H1 (cell line): ENCODE measurements at regions of chr15 and their contacts with region 1.

Region 1: DNA sequence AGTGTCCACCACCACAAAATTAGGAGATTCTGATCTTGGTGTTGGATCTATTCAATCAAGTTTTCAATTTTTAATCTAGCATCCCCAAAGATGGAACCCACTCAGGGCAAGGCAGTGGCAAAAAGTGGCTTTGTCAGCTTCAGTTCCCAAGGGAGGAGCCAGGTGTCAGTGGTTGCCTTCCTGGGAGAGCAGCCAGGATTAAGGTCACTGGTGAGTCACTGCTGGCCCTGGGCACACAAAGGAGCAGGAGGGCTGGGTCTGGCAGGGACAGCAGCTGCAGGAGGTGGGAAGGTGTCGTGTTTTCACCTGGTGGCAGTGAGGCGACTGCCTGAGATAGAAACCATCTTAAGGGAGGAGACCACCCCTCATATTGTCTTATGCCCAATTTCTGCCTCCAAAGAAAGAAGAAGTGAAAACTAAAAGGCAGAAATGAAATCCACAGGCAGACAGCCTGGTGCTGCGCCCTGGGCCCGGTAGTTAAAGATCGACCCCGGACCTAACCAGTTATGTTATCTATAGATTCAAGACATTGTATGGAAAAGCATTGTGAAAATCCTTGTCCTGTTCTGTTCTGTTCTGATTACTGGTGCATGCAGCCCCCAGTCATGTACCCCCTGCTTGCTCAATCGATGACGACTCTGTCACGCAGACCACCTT is 5.9 kb upstream of the KLHL25 start:
- DNase-seq: no peak
- H3K4me3 ChIP-seq: no peak overlapping the region
- H3K27ac ChIP-seq: no peak overlapping the region
- H3K4me1 ChIP-seq: peaks cover 0 to under 1% (median 0%) of the 10 kb centered on the region in 4 experiments; a peak in 1 of 7 replicates
- H3K27me3 ChIP-seq: peaks cover 0 to 4% (median 1%) of the 10 kb centered on the region in 4 experiments; a peak in 3 of 7 replicates
- CTCF ChIP-seq: no peak
- EP300 ChIP-seq: no peak
- POLR2A ChIP-seq: no peak
- RAD21 ChIP-seq: peak in 1 of 2 experiments; percentile 8; a peak in 1 of 4 replicates

Region 2: DNA sequence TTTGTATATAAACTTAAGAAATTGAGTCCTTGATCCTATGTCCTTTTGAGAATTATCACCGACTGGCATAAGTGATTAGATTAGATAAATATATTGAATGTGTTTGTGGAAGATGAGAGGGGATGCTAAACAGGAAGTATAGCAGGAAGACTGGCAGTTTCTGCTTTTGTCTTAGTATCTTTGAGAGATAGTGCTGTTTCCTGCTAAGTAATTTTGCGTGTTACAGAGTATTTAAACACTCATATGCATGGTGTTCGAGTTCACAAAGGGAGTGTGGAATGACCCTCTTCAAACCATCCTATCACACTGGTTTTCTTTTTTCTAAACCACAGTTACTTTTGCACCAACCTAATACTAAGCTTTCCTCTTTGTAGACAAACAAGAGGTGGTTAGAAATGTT is 111.9 kb before region 1 on chr15:
- CTCF ChIA-PET with region 1: no interaction called
- POLR2A ChIA-PET with region 1: no interaction called
- DNase-seq: no peak
- H3K4me3 ChIP-seq: no peak overlapping the region
- H3K27ac ChIP-seq: no peak overlapping the region; the same call in 1 of the 2 replicates
- H3K4me1 ChIP-seq: peaks cover 0 to 6% (median 6%) of the 10 kb centered on the region in 4 experiments; a peak in 4 of 7 replicates
- H3K27me3 ChIP-seq: no peaks in the 10 kb centered on the region
- CTCF ChIP-seq: no peak
- EP300 ChIP-seq: no peak
- POLR2A ChIP-seq: no peak
- RAD21 ChIP-seq: no peak

Region 3: GRCh38 chr15:85785887-85786780 is 14.5 kb before region 1 on chr15:
- CTCF ChIA-PET with region 1: interaction called, 34 read pairs
- POLR2A ChIA-PET with region 1: interaction called, 4 read pairs
- DNase-seq: no peak
- H3K4me3 ChIP-seq: no peak overlapping the region
- H3K27ac ChIP-seq: no peak overlapping the region
- H3K4me1 ChIP-seq: peaks cover 0 to 21% (median 11%) of the 10 kb centered on the region in 4 experiments; a peak in 6 of 7 replicates
- H3K27me3 ChIP-seq: no peaks in the 10 kb centered on the region
- CTCF ChIP-seq: no peak
- EP300 ChIP-seq: no peak
- POLR2A ChIP-seq: no peak
- RAD21 ChIP-seq: no peak

Region 4: GRCh38 chr15:86044981-86045380 is 244.4 kb after region 1 on chr15:
- CTCF ChIA-PET with region 1: no interaction called
- POLR2A ChIA-PET with region 1: no interaction called
- DNase-seq: peak in 1 of 2 experiments; percentile 34
- H3K4me3 ChIP-seq: no peak overlapping the region
- H3K27ac ChIP-seq: no peak overlapping the region
- H3K4me1 ChIP-seq: peaks cover 2 to 16% (median 7%) of the 10 kb centered on the region in 4 experiments; a peak in 5 of 7 replicates
- H3K27me3 ChIP-seq: no peaks in the 10 kb centered on the region
- CTCF ChIP-seq: peak in 2 of 3 experiments; percentile 12 to 19; a peak in 2 of 4 replicates
- EP300 ChIP-seq: no peak
- POLR2A ChIP-seq: no peak
- RAD21 ChIP-seq: peak in 1 of 2 experiments; percentile 45; a peak in 1 of 4 replicates